ENCODE measurements at regions of chr20 and their contacts with region 1.

Region 1: GRCh38 chr20:57048027-57048869 is 218.2 kb downstream of the BMP7 start:
- DNase-seq: peak in 1 of 2 donors; percentile 51
- H3K4me3 ChIP-seq: no peak overlapping the region
- H3K27ac ChIP-seq: no peak overlapping the region
- H3K4me1 ChIP-seq: peaks cover 0 to 5% (median 0%) of the 10 kb centered on the region in 4 donors
- H3K27me3 ChIP-seq: peaks cover 0 to 26% (median 10%) of the 10 kb centered on the region in 3 donors
- CTCF ChIP-seq: peak in 4 of 7 experiments; percentile 16 to 37 (median 32)
- EP300 ChIP-seq: no peak
- POLR2A ChIP-seq: no peak

Region 2: GRCh38 chr20:56554869-56555268 is 493.4 kb before region 1 on chr20:
- intact Hi-C with region 1: loop called (anchors 10 kb)
- DNase-seq: peak in 1 of 2 donors; percentile 79
- H3K4me3 ChIP-seq: no peak overlapping the region
- H3K27ac ChIP-seq: no peak overlapping the region
- H3K4me1 ChIP-seq: peaks cover 0 to 11% (median 0%) of the 10 kb centered on the region in 4 donors
- H3K27me3 ChIP-seq: no peaks in the 10 kb centered on the region
- CTCF ChIP-seq: no peak
- EP300 ChIP-seq: no peak
- POLR2A ChIP-seq: no peak

Measured in stomach (tissue), 19 donors.